ENCODE measurements at regions of chr7 and their contacts with region 1.

Region 1: DNA sequence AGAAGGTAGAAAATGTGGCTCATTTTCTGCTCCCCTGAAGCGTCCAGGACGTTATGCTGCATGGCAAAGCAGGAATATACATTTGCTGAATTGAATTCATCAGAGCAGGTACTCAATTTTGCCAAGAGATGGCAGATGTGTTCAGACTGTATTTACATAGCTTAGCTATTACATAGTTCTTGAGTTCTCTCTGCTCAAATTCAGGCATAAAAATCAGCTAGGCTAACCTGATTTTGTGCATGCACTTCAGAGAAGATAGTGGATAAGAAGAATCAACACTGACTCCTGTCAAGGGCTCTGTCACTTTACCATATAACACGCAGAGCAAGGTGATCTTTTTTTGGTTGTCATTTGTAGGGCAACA is 209.2 kb upstream of the FAM3C start:
- DNase-seq: peak; percentile 71
- H3K4me3 ChIP-seq: no peak overlapping the region
- H3K27ac ChIP-seq: no peak overlapping the region
- H3K4me1 ChIP-seq: peaks cover 23% of the 10 kb centered on the region
- H3K27me3 ChIP-seq: no peaks in the 10 kb centered on the region
- CTCF ChIP-seq: peak; percentile 64

Region 2: GRCh38 chr7:121126801-121127534 is 478.3 kb before region 1 on chr7:
- CTCF ChIA-PET with region 1: no interaction called
- POLR2A ChIA-PET with region 1: no interaction called
- intact Hi-C with region 1: loop called (anchors 5 kb)
- DNase-seq: peak; percentile 28
- H3K4me3 ChIP-seq: no peak overlapping the region
- H3K27ac ChIP-seq: no peak overlapping the region
- H3K4me1 ChIP-seq: peaks cover 10% of the 10 kb centered on the region
- H3K27me3 ChIP-seq: no peaks in the 10 kb centered on the region
- CTCF ChIP-seq: peak; percentile 57; the same call in 1 of the 2 replicates

Region 3: DNA sequence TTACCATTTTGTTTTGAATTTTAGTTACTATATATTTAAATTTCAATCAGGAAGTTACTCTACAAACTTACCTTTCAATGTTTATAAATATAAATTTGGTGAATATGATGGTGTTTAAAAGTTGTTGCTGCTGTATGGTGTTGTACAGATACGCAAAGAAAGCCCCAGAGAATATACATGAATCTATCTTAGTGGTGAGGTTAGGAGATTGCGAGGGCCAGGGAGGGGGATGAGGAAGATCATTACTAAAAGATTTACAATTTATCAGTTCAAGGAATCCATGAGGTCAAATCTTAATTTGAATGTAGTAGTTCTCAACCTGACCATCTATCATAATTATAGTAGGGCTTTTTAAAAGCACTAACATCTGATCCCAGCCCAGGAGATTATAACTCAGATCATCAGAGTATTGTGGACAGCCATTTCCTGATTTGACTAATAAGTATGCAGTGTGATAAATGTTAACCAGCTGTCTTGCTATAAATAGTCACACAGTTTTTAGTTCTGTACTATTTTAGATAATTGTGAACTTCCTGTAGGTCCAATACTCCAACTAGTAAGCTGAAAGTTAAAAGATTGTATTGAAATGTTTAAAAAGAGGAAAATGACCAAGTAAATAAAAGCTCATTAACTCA is 232.8 kb before region 1 on chr7:
- CTCF ChIA-PET with region 1: no interaction called
- POLR2A ChIA-PET with region 1: no interaction called
- intact Hi-C with region 1: loop called (anchors 5 kb)
- DNase-seq: peak; percentile 81
- H3K4me3 ChIP-seq: no peak overlapping the region
- H3K27ac ChIP-seq: peak overlapping the region; percentile 28
- H3K4me1 ChIP-seq: peaks cover 39% of the 10 kb centered on the region
- H3K27me3 ChIP-seq: no peaks in the 10 kb centered on the region
- CTCF ChIP-seq: no peak

Region 4: DNA sequence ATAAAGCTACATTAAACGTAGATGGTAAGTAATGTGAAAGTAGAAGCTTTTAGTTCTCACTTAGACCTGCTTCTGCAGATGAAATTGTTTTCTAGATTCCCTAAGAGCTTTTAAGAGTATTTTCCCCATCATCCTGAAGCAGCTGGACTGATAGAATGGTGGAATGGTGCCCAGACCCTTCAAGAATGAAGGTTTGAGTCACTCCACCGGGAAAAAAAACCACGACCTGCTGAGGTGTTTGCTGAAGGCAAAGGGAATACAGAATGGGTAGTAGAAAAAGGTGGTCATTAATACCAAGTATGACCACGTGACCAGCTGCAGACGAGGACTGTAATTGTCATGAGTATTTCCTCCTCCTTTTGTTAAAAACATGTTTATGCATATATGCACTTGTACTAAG is 188.4 kb after region 1 on chr7:
- CTCF ChIA-PET with region 1: no interaction called
- POLR2A ChIA-PET with region 1: no interaction called
- intact Hi-C with region 1: no loop called
- DNase-seq: no peak
- H3K4me3 ChIP-seq: no peak overlapping the region
- H3K27ac ChIP-seq: no peak overlapping the region
- H3K4me1 ChIP-seq: peaks cover 6% of the 10 kb centered on the region
- H3K27me3 ChIP-seq: no peaks in the 10 kb centered on the region
- CTCF ChIP-seq: no peak